Thyroid gland (tissue), 4 donors: ENCODE measurements at regions of chr5 and their contacts with region 1.

Region 1: DNA sequence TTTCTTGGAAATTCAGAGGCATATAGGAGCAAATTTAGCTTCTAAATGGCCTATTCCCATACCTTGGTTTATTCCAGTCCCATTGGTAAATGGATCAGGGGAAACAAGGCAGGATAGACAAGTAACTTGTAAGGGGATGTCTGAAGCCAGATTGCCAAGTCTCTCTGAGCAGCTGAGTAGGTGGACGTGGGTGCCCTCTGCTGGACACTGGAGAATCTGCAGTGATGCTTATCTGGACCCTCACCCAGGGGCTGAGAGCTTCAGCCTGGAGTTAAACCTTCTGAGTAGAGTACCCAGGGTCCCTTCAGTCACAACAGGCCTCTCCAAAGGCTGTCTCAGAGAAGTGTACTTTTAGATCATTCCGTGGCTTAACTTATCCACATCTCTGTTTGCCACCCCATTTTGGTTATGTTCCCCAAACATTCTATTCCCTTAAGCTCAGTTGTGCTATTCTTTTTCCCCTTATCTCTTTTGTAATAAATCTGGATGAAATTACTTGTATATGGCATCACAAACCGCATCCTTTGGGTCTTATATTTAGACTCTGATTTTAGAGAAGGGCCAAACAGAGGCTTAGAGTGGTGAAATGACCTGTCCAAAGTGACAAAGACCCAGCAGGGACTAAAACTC is 218.3 kb upstream of the GLRA1 start:
- DNase-seq: peak; percentile 60 to 68
- H3K4me3 ChIP-seq: no peak overlapping the region
- H3K27ac ChIP-seq: no peak overlapping the region
- H3K4me1 ChIP-seq: peaks cover 6 to 7% of the 10 kb centered on the region in 2 donors
- H3K27me3 ChIP-seq: no peaks in the 10 kb centered on the region
- CTCF ChIP-seq: peak; percentile 65 to 87 (median 80)
- POLR2A ChIP-seq: no peak

Region 2: DNA sequence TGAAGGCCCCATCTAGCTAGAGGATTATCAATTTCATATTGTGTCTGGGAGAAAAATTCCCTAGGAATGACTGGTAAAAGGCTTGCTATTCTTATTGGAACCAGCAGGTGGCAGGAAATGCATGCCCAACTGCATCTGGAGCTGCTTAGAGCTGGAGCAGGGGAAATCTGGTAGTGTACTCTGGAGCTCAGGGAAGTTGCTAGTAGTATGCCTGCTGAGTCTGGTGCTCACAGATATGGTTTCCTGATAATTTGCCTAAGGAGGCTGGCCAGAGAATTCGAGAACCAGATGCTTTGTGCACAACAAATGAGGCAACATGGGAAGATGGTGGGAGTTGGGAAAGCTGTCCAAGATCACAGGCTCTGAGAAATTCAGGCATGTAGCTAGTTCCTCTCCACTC is 317.5 kb before region 1 on chr5:
- intact Hi-C with region 1: loop called (anchors 2 kb)
- DNase-seq: peak; percentile 58 to 62
- H3K4me3 ChIP-seq: no peak overlapping the region
- H3K27ac ChIP-seq: no peak overlapping the region
- H3K4me1 ChIP-seq: no peaks in the 10 kb centered on the region
- H3K27me3 ChIP-seq: no peaks in the 10 kb centered on the region
- CTCF ChIP-seq: peak; percentile 74 to 93 (median 85)
- POLR2A ChIP-seq: no peak

Region 3: GRCh38 chr5:151924564-151925301 is 218.2 kb before region 1 on chr5 and contains the start of gene GLRA1:
- intact Hi-C with region 1: loop called (anchors 10 kb)
- DNase-seq: peak; percentile 47 to 68
- H3K4me3 ChIP-seq: no peak within 1 kb of the TSS
- H3K27ac ChIP-seq: no peak within 1 kb of the TSS
- H3K4me1 ChIP-seq: no peaks in the 10 kb centered on the region
- H3K27me3 ChIP-seq: no peaks in the 10 kb centered on the region
- CTCF ChIP-seq: no peak
- POLR2A ChIP-seq: no peak
- total RNA-seq, gene GLRA1: not detected

Region 4: GRCh38 chr5:152505442-152506042 is 362.6 kb after region 1 on chr5:
- intact Hi-C with region 1: loop called (anchors 10 kb)
- DNase-seq: peak; percentile 65 to 75
- H3K4me3 ChIP-seq: no peak overlapping the region
- H3K27ac ChIP-seq: no peak overlapping the region
- H3K4me1 ChIP-seq: no peaks in the 10 kb centered on the region
- H3K27me3 ChIP-seq: no peaks in the 10 kb centered on the region
- CTCF ChIP-seq: peak in 5 of 6 experiments; percentile 32 to 67 (median 60)
- POLR2A ChIP-seq: no peak